ENCODE measurements at regions of chr17 and their contacts with region 1.

Region 1: DNA sequence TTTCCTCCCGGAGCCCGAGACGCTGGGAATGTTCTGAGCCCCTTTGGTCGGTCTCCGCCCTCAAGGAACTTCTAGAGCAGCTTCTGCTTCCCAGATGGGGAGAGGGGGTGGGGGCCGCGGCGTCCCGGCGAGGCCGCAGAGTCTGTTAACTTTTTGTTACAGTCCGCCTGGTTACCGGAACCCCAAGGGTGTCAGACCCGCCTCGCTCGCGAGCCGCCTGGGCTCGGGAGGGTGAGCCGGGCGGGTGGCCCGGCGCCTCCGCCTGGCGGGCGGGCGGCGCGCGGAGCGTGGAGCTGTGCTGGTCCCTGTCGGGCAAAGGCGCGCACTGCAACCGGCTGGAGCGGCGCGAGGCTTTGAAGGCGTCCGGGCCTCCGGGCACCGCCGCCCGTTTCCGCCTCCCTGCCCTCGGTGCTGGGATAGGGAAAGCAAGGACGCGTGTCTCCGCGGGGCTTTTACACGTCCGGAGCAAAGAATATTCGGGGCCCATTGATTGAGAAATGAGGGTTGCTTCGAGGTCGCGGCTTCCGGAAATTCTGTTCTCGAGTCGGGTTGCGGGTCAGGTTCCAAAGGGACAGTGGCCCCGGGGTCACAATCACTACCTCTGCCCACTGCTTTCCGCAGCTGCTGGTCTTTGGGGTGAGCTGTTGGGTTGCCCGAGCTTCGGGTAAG is 1.7 kb downstream of the HS3ST3B1 start:
- DNase-seq: peak; percentile 87
- ATAC-seq: peak; percentile 79

Region 2: GRCh38 chr17:14228903-14229302 is 73.7 kb before region 1 on chr17:
- intact Hi-C with region 1: no loop called
- DNase-seq: no peak
- ATAC-seq: no peak

Region 3: DNA sequence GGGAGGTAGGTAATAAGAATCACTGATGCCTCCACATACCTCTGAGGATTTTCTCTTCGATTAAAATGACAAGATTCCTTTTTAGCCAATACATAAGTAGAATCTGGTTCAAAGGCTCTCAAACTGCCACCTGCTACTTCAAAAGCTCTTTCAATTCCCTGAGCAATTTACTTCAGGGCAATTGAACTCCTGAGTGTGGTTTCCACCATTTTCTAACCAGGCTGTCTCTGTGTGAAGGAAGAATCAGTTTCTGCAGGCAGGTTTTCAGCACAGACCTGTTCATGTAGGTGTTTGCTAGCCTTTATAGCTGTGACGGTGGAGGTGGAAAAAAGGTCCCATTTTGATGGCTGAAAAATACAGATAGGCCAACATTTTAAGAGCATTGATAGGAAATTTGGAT is 19.8 kb before region 1 on chr17:
- intact Hi-C with region 1: no loop called
- DNase-seq: no peak
- ATAC-seq: no peak

Region 4: DNA sequence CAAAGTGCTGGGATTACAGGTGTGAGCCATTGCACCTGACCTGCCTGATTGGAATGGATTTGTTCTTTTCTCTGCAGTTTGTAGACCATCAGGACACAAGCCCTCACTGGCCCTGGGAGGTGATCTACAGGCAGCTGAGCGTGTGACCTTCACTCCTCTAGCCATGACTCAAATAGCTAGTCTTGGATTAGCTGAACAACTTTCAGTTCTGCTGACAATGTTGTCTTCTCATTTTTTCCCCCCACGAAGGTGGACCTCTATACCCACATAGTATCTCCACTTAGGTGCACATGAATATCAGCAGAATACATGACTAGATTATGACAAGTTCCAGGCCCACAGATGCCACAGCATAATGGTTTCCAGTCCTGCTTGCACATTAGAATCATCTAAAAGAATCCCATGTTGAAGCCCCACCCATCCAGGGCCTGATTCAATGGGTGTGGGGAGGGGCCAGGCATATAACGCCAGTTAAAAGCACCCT is 35.1 kb after region 1 on chr17:
- intact Hi-C with region 1: loop called (anchors 2 kb)
- DNase-seq: no peak
- ATAC-seq: no peak